ENCODE measurements at regions of chr14 and their contacts with region 1.

Region 1: DNA sequence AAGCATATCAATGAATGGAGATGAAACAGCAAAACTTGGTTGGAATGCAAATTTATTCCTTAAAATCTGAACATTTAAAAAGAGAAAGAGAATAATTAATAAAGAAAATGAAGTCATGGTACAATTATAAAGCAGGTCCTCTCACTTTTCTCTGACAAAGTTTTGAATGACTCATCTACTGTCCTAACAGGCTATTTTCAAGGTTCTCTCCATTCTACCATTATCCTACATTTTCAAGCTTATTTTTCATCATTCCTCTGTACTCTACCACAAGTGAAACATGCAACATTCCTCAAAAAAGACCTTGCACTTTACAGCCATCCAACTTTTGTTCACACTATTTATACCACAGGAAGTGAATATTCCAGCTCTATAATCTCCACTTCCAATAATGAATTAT is 36.9 kb upstream of the AP4S1 start:
- DNase-seq: no peak
- H3K4me3 ChIP-seq: no peak overlapping the region
- H3K27ac ChIP-seq: peak overlapping the region in 2 of 5 donors; percentile 0 to 25
- H3K4me1 ChIP-seq: peaks cover 0 to 60% (median 35%) of the 10 kb centered on the region in 4 donors
- H3K27me3 ChIP-seq: no peaks in the 10 kb centered on the region
- CTCF ChIP-seq: no peak
- EP300 ChIP-seq: no peak
- POLR2A ChIP-seq: no peak

Region 2: DNA sequence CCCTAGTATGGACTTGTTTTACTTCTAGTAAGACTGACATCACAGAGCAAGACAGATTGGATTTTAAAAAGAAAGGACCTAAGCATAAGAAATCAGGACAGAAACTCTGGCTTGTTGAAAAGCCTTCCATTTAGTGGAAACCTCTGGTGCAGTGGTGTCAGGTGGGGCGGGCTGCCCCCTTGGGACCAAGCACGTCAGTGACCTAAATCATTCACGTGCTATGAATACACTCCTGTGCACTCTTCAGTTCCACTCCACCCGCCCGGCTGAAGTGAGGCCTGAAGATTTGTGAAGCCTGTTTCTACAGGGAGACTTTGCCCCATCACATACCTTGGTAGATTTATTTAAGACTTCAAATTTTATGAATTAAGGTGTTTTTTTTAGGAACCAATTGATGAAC is 95.9 kb after region 1 on chr14:
- intact Hi-C with region 1: loop called (anchors 10 kb)
- DNase-seq: no peak
- H3K4me3 ChIP-seq: no peak overlapping the region
- H3K27ac ChIP-seq: no peak overlapping the region
- H3K4me1 ChIP-seq: peaks cover 0 to 11% (median 2%) of the 10 kb centered on the region in 4 donors
- H3K27me3 ChIP-seq: no peaks in the 10 kb centered on the region
- CTCF ChIP-seq: no peak
- EP300 ChIP-seq: no peak
- POLR2A ChIP-seq: no peak